ENCODE measurements at regions of chr11 and their contacts with region 1.

Region 1: DNA sequence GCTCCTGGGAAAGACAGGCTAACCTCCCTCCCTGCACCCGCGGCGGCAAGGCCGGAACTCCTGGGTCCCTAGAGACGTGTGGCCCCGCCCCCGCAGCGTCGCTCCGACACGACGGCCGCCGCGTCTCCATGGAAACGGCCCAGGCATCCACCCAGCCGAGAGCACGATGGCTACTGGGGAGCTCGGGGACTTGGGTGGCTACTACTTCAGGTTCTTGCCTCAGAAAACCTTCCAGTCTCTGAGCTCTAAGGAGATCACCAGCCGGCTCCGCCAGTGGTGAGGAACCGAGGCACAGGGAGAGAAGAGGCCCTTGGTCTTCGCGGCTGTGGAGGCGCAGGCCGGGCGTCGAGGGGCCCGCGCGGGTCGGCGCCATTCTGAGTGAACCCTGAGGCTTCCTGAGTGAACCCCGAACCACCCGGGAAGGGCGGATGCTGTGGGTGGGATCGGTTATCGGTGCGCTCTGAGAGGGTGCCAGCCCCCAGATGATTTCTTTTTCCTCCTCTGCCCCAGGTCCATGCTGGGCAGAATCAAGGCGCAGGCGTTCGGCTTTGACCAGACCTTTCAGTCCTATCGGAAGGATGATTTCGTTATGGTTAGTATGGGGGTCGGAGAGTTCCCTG is at the start of gene CFAP300:
- DNase-seq: peak; percentile 96
- ATAC-seq: peak; percentile 98
- total RNA-seq, gene CFAP300: 0.38 TPM

Region 2: GRCh38 chr11:102144357-102145342 is 97.2 kb after region 1 on chr11:
- intact Hi-C with region 1: no loop called
- DNase-seq: no peak
- ATAC-seq: peak; percentile 77

Region 3: GRCh38 chr11:102513869-102514268 is 466.5 kb after region 1 on chr11:
- intact Hi-C with region 1: loop called (anchors 10 kb)
- DNase-seq: no peak
- ATAC-seq: no peak

Measured in Right ventricle myocardium superior (tissue), 1 donor.